K562 (cell line): ENCODE measurements at regions of chr7 and their contacts with region 1.

Region 1: DNA sequence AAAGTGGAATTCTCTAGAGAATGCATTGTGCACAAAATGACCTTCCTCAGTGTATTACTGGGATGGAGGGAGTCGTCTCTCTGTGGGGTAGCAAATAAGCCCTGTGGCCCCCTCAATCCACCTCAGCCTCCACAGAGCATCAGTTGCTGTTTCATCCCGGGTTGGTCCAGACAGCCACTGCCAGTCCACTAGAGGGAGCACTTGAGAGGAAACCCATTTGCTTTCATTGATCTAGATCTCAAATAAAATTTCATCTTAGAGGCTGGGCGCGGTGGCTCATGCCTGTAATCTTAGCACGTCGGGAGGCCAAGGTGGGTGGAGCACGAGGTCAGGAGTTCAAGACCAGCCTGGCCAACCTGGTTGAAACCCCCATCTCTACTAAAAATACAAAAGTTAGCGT is 1128.7 kb downstream of the CNTNAP2 start:
- DNase-seq: peak; percentile 51 to 56 (median 56)
- ATAC-seq: peak; percentile 86
- H3K4me3 ChIP-seq: no peak overlapping the region
- H3K27ac ChIP-seq: no peak overlapping the region
- H3K4me1 ChIP-seq: no peaks in the 10 kb centered on the region
- H3K27me3 ChIP-seq: no peaks in the 10 kb centered on the region
- CTCF ChIP-seq: peak; percentile 44 to 70 (median 57)
- EP300 ChIP-seq: no peak
- POLR2A ChIP-seq: no peak
- RAD21 ChIP-seq: peak in 1 of 2 experiments; percentile 38; a peak in 2 of 4 replicates

Region 2: DNA sequence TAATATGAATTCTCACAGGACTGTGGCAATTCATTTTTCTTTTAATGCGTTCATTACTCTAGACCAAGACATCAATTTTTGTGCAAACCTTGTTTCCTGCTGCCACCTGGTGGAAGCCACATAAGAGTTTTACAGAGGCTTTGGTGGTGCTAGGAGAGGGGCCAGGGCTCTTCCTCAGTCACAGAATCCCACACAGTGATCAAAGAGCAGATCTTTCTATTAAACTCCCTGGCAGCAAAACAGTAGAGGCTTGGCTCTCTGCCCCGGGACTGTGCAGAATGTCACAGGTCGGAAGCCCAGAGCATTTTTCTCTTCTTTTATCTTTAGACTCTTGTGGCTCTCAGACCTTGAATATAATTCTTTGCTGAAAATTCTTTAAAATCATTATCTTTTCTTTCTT is 838.8 kb after region 1 on chr7:
- CTCF ChIA-PET with region 1: no interaction called
- POLR2A ChIA-PET with region 1: no interaction called
- in situ Hi-C with region 1: no loop called
- intact Hi-C with region 1: loop called (anchors 10 kb)
- DNase-seq: peak; percentile 14 to 57 (median 24)
- ATAC-seq: peak; percentile 80
- H3K4me3 ChIP-seq: no peak overlapping the region
- H3K27ac ChIP-seq: no peak overlapping the region
- H3K4me1 ChIP-seq: no peaks in the 10 kb centered on the region
- H3K27me3 ChIP-seq: no peaks in the 10 kb centered on the region
- CTCF ChIP-seq: peak; percentile 29 to 57 (median 54); a peak in 4 of 6 replicates
- EP300 ChIP-seq: no peak
- POLR2A ChIP-seq: no peak
- RAD21 ChIP-seq: peak; percentile 56 to 75

Region 3: GRCh38 chr7:148242294-148242801 is 997.1 kb after region 1 on chr7:
- CTCF ChIA-PET with region 1: no interaction called
- POLR2A ChIA-PET with region 1: no interaction called
- in situ Hi-C with region 1: no loop called
- intact Hi-C with region 1: loop called (anchors 10 kb)
- DNase-seq: peak; percentile 63 to 73 (median 68)
- ATAC-seq: peak; percentile 98
- H3K4me3 ChIP-seq: no peak overlapping the region
- H3K27ac ChIP-seq: no peak overlapping the region
- H3K4me1 ChIP-seq: no peaks in the 10 kb centered on the region
- H3K27me3 ChIP-seq: no peaks in the 10 kb centered on the region
- CTCF ChIP-seq: peak; percentile 74 to 93 (median 92)
- EP300 ChIP-seq: no peak
- POLR2A ChIP-seq: no peak
- RAD21 ChIP-seq: peak; percentile 46 to 86